Cardiac septum (tissue), 1 donor: ENCODE measurements at regions of chr7 and their contacts with region 1.

Region 1: GRCh38 chr7:71131256-71132126 is 453 bp upstream of the GALNT17 start:
- DNase-seq: no peak

Region 2: DNA sequence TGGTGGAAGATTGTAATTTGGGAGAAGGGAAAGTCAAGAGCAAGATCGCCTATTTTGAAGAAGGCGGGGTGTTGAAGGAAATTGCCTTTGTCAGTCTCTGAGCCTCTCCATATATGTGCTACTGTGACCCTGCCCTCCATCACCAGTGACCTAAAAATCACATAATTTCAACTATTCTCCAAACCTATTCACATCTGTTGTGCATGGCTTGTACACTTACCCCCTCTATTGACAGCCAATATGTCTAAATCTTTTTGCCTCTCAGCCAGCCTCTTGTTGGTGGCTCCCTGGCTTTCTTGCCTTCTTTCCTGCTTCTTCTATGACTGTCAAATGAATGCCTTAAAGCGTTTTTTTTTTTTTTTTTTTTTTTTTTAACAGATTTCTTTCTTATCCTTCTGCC is 1237.6 kb before region 1 on chr7:
- intact Hi-C with region 1: no loop called
- DNase-seq: no peak

Region 3: GRCh38 chr7:70856866-70857630 is 274.4 kb before region 1 on chr7:
- intact Hi-C with region 1: loop called (anchors 10 kb)
- DNase-seq: no peak

Region 4: DNA sequence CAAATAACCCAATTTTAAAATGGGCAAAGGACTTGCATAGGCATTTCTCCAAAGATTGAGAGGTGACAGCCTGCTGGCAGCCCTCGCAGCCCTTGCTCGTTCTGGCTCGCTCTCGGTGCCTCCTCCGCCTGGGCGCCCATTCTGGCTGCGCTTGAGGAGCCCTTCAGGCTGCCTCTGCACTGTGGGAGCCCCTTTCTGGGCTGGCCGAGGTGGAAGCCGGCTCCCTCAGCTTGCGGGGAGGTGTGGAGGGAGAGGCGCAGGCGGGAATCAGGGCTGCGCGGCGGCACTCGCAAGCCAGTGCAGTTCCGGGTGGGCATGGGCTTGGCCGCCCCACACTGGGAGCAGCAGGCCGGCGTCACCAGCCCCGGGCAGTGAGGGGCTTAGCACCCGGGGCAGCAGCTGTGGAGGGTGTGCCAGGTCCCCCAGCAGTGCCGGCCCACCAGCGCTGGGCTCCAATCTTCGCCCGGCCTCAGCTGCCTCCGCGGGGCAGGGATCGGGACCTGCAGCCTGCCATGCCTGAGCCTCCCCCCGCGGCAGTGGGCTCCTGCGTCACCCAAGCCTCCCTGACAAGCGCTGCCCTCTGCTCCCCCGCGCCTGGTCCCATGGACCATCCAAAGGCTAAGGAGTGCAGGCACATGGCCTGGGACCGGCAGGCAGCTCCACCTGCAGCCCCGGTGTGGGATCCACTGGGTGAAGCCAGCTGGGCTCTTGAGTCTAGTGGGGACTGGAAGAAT is 53.6 kb before region 1 on chr7:
- intact Hi-C with region 1: no loop called
- DNase-seq: no peak

Region 5: GRCh38 chr7:71237945-71238344 is 106.5 kb after region 1 on chr7:
- intact Hi-C with region 1: loop called (anchors 5 kb)
- DNase-seq: no peak

Region 6: GRCh38 chr7:71308096-71308495 is 176.6 kb after region 1 on chr7:
- intact Hi-C with region 1: loop called (anchors 5 kb)
- DNase-seq: no peak

Region 7: GRCh38 chr7:71408271-71408670 is 276.8 kb after region 1 on chr7:
- intact Hi-C with region 1: loop called (anchors 2 kb)
- DNase-seq: peak; percentile 83

Region 8: DNA sequence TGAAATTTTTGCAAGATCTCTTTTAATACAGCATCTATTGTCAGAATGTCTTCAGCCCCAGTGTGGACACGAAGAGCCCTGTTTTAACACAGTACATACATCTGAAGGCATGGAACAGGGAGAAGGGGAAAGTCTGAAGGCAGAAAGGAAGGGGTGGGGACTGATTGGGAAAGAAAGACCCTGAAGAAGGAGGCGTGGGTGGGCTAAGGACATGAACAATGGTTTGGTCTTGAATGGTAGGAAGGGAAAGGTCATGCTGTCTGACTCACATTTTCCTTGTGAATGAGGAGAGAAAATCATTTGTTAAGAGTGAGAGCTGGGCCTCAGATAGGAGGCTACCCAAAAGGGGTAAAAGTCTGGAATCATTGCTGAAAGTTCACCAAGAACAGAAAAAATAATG is 297.6 kb after region 1 on chr7:
- intact Hi-C with region 1: no loop called
- DNase-seq: no peak

Region 9: GRCh38 chr7:71612911-71613310 is 481.4 kb after region 1 on chr7:
- intact Hi-C with region 1: loop called (anchors 5 kb)
- DNase-seq: no peak